Activated CD4-positive, alpha-beta memory T cell treated with anti-CD3 and anti-CD28 coated beads, Interleukin-2, amount 10 ng/mL, durations not matched to agents 7 days and 5 days (primary cell): ENCODE measurements at regions of chr2 and their contacts with region 1.

Region 1: GRCh38 chr2:169824373-169825333 is at the start of gene METTL5:
- DNase-seq: peak; percentile 83
- H3K4me3 Mint-ChIP-seq: peak within 1 kb of the TSS; percentile 87
- H3K27ac Mint-ChIP-seq: peak within 1 kb of the TSS; percentile 75
- H3K4me1 Mint-ChIP-seq: peaks cover 67% of the 10 kb centered on the region
- H3K27me3 Mint-ChIP-seq: no peaks in the 10 kb centered on the region
- total RNA-seq, gene METTL5: 63.4 to 63.6 TPM

Region 2: DNA sequence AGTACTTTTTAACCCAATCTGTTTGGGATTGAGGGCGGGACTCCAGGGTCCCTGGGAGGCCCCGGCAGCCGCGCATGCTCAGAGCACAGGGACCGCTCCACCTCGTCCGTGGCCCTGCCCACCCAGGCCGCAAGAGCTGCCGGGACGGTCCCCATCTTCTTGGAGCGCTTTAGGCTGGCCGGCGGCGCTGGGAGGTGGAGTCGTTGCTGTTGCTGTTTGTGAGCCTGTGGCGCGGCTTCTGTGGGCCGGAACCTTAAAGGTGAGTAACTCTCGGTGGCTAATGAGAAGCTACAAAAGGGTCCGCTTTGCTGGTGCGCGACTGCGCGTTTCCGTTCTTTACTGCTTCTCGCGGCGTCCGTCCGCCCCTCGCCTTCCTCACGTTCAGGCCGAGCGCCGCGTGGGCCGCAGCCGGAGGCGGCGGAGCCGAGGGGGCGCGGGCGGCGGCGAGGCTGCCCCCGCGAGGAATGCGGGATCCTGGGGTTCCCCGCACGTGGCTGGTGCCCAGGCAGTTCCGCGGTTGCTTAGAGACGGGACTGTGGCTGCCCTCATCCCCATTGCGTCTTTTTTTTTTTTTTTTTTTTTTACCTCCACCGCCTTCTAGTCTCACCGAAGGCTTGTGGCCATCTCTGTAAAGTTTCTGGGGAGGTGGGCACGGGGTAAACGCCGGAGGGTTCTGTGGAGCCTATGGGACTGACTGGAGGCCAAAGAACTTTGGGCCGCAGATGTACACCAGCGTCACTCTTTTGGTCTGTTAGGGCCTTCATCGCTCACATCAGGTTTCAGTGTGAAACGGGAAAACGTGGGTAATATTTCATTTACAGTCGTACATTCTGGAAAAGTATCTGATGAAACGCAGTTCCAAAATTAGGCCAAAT is 25.7 kb before region 1 on chr2 and contains the start of gene SSB:
- CTCF ChIA-PET with region 1: interaction called, 9 read pairs
- POLR2A ChIA-PET with region 1: interaction called, 20 read pairs
- DNase-seq: peak; percentile 96
- H3K4me3 Mint-ChIP-seq: peak within 1 kb of the TSS; percentile 82
- H3K27ac Mint-ChIP-seq: peak within 1 kb of the TSS; percentile 86
- H3K4me1 Mint-ChIP-seq: peaks cover 35% of the 10 kb centered on the region
- H3K27me3 Mint-ChIP-seq: peaks cover 2% of the 10 kb centered on the region
- total RNA-seq, gene SSB: 81.6 to 85.4 TPM